ENCODE measurements at regions of chr3 and their contacts with region 1.

Region 1: GRCh38 chr3:194315088-194315964 is 35.8 kb downstream of the CPN2 start:
- DNase-seq: peak; percentile 83 to 89
- ATAC-seq: peak; percentile 87 to 89 (median 89)
- H3K4me3 ChIP-seq: peak overlapping the region; percentile 20
- H3K4me3 Mint-ChIP-seq: peak overlapping the region; percentile 79
- H3K27ac ChIP-seq: no peak overlapping the region
- H3K27ac Mint-ChIP-seq: peak overlapping the region in 1 of 2 donors; percentile 55
- H3K4me1 ChIP-seq: peaks cover 14% of the 10 kb centered on the region
- H3K4me1 Mint-ChIP-seq: peaks cover 7 to 16% of the 10 kb centered on the region in 2 donors
- H3K27me3 ChIP-seq: peaks cover 26% of the 10 kb centered on the region
- H3K27me3 Mint-ChIP-seq: peaks cover 56 to 77% of the 10 kb centered on the region in 2 donors
- CTCF ChIP-seq: peak; percentile 98

Region 2: GRCh38 chr3:193040836-193041672 is 1274.3 kb before region 1 on chr3:
- intact Hi-C with region 1: no loop called
- DNase-seq: peak in 1 of 2 donors; percentile 47
- ATAC-seq: no peak
- H3K4me3 ChIP-seq: no peak overlapping the region
- H3K4me3 Mint-ChIP-seq: no peak overlapping the region
- H3K27ac ChIP-seq: no peak overlapping the region
- H3K27ac Mint-ChIP-seq: no peak overlapping the region
- H3K4me1 ChIP-seq: no peaks in the 10 kb centered on the region
- H3K4me1 Mint-ChIP-seq: no peaks in the 10 kb centered on the region
- H3K27me3 ChIP-seq: no peaks in the 10 kb centered on the region
- H3K27me3 Mint-ChIP-seq: no peaks in the 10 kb centered on the region
- CTCF ChIP-seq: no peak

Region 3: GRCh38 chr3:193665370-193665989 is 649.8 kb before region 1 on chr3:
- intact Hi-C with region 1: loop called (anchors 1 kb)
- DNase-seq: peak in 1 of 2 donors; percentile 55
- ATAC-seq: no peak
- H3K4me3 ChIP-seq: no peak overlapping the region
- H3K4me3 Mint-ChIP-seq: no peak overlapping the region
- H3K27ac ChIP-seq: no peak overlapping the region
- H3K27ac Mint-ChIP-seq: no peak overlapping the region
- H3K4me1 ChIP-seq: no peaks in the 10 kb centered on the region
- H3K4me1 Mint-ChIP-seq: no peaks in the 10 kb centered on the region
- H3K27me3 ChIP-seq: no peaks in the 10 kb centered on the region
- H3K27me3 Mint-ChIP-seq: no peaks in the 10 kb centered on the region
- CTCF ChIP-seq: peak; percentile 72

Region 4: GRCh38 chr3:193780810-193781472 is 534.4 kb before region 1 on chr3:
- intact Hi-C with region 1: loop called (anchors 2 kb)
- DNase-seq: peak in 1 of 2 donors; percentile 55
- ATAC-seq: no peak
- H3K4me3 ChIP-seq: no peak overlapping the region
- H3K4me3 Mint-ChIP-seq: no peak overlapping the region
- H3K27ac ChIP-seq: no peak overlapping the region
- H3K27ac Mint-ChIP-seq: no peak overlapping the region
- H3K4me1 ChIP-seq: no peaks in the 10 kb centered on the region
- H3K4me1 Mint-ChIP-seq: no peaks in the 10 kb centered on the region
- H3K27me3 ChIP-seq: peaks cover 2% of the 10 kb centered on the region
- H3K27me3 Mint-ChIP-seq: peaks cover 26 to 70% of the 10 kb centered on the region in 2 donors
- CTCF ChIP-seq: peak; percentile 12

Region 5: DNA sequence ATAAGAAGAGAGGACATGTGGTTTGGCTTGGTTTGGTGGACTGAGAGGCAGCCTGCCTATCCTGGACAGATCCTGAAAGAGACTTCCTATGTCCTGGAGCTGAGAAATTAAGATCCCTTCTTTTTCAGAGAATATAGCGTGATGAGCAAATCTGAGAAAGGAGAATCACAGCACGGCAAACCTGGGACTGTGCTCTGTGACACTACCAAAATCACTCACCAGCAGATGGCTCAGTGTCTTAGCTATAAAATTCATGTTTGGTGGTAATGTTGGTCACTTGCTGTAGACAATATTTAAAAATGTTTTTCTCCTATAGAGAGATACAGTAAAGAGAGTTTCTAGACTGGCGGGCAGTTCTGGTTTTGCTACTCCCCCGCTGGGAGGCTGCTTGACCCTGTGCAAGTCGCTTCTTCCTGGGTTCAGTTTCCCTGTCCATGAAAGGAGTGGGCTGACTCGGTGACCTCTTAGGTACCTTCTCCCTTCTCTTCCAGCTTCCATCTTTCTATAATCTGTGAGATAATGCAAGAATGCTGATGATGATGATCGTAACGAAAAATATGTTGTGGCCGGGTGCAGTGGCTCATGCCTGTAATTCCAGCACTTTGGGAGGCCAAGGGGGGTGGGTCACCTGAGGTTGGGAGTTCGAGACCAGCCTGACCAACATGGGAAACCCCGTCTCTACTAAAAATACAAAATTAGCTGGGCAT is 187.0 kb before region 1 on chr3:
- intact Hi-C with region 1: loop called (anchors 1 kb)
- DNase-seq: no peak
- ATAC-seq: no peak
- H3K4me3 ChIP-seq: no peak overlapping the region
- H3K4me3 Mint-ChIP-seq: no peak overlapping the region
- H3K27ac ChIP-seq: no peak overlapping the region
- H3K27ac Mint-ChIP-seq: no peak overlapping the region
- H3K4me1 ChIP-seq: peaks cover 8% of the 10 kb centered on the region
- H3K4me1 Mint-ChIP-seq: peaks cover 9 to 10% of the 10 kb centered on the region in 2 donors
- H3K27me3 ChIP-seq: peaks cover 30% of the 10 kb centered on the region
- H3K27me3 Mint-ChIP-seq: peaks cover 42 to 70% of the 10 kb centered on the region in 2 donors
- CTCF ChIP-seq: no peak